Calu3 (cell line): ENCODE measurements at regions of chr11 and their contacts with region 1.

Region 1: GRCh38 chr11:77819411-77819920 is 1.1 kb downstream of the RSF1 start:
- DNase-seq: peak; percentile 79
- H3K4me3 Mint-ChIP-seq: peak overlapping the region; percentile 90
- H3K27ac Mint-ChIP-seq: peak overlapping the region; percentile 85
- H3K4me1 Mint-ChIP-seq: peaks cover 18% of the 10 kb centered on the region
- H3K27me3 Mint-ChIP-seq: no peaks in the 10 kb centered on the region
- CTCF ChIP-seq: no peak

Region 2: DNA sequence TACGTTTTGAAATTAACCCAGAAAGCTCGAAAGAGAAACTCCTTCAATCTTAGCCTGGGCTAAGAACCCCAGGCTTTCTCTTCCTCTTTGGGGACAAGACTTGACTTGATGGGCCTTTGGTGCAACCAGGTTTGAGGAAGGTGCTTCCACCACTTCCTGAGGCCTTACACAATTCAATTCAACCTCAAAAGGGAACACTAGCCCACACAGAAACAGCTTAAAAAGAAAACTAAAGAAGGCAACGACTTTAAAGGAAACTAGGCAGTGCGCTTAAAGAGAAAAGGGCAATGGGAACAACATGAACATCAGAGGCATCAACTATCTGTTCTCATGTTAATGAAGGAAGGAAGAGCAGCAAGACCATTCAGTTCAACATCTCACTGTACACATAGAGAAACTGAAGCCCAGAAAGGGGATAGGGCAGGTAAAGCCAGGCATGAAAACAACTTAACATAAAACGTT is 370.4 kb before region 1 on chr11:
- CTCF ChIA-PET with region 1: no interaction called
- intact Hi-C with region 1: no loop called
- DNase-seq: no peak
- H3K4me3 Mint-ChIP-seq: no peak overlapping the region
- H3K27ac Mint-ChIP-seq: no peak overlapping the region
- H3K4me1 Mint-ChIP-seq: peaks cover 26% of the 10 kb centered on the region
- H3K27me3 Mint-ChIP-seq: no peaks in the 10 kb centered on the region
- CTCF ChIP-seq: no peak

Region 3: GRCh38 chr11:77710358-77710757 is 109.1 kb before region 1 on chr11:
- CTCF ChIA-PET with region 1: no interaction called
- intact Hi-C with region 1: loop called (anchors 10 kb)
- DNase-seq: no peak
- H3K4me3 Mint-ChIP-seq: no peak overlapping the region
- H3K27ac Mint-ChIP-seq: peak overlapping the region; percentile 67
- H3K4me1 Mint-ChIP-seq: peaks cover 31% of the 10 kb centered on the region
- H3K27me3 Mint-ChIP-seq: no peaks in the 10 kb centered on the region
- CTCF ChIP-seq: no peak

Region 4: DNA sequence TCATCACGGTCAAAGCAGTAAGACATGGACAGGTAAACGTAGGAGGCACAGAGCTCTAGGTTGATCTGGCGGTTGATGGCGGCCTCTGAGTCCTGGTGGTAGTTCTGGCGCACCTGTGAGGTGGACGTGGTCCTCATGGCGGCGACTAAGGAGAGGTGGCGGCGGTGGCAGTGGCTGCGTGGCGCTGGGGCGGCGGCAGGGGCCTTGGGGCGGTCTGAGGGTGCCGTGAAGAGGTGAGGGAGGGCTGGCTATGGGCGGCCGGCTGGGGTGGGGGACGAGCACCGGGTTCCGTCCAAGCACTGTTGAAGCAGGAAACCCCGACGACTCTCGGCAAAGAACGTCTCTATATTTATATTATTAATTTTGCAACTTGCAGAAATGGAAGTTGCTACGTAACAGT is 84.6 kb before region 1 on chr11:
- CTCF ChIA-PET with region 1: no interaction called
- intact Hi-C with region 1: no loop called
- DNase-seq: no peak
- H3K4me3 Mint-ChIP-seq: no peak overlapping the region
- H3K27ac Mint-ChIP-seq: no peak overlapping the region
- H3K4me1 Mint-ChIP-seq: no peaks in the 10 kb centered on the region
- H3K27me3 Mint-ChIP-seq: no peaks in the 10 kb centered on the region
- CTCF ChIP-seq: no peak